ENCODE measurements at regions of chr1 and their contacts with region 1.

Region 1: DNA sequence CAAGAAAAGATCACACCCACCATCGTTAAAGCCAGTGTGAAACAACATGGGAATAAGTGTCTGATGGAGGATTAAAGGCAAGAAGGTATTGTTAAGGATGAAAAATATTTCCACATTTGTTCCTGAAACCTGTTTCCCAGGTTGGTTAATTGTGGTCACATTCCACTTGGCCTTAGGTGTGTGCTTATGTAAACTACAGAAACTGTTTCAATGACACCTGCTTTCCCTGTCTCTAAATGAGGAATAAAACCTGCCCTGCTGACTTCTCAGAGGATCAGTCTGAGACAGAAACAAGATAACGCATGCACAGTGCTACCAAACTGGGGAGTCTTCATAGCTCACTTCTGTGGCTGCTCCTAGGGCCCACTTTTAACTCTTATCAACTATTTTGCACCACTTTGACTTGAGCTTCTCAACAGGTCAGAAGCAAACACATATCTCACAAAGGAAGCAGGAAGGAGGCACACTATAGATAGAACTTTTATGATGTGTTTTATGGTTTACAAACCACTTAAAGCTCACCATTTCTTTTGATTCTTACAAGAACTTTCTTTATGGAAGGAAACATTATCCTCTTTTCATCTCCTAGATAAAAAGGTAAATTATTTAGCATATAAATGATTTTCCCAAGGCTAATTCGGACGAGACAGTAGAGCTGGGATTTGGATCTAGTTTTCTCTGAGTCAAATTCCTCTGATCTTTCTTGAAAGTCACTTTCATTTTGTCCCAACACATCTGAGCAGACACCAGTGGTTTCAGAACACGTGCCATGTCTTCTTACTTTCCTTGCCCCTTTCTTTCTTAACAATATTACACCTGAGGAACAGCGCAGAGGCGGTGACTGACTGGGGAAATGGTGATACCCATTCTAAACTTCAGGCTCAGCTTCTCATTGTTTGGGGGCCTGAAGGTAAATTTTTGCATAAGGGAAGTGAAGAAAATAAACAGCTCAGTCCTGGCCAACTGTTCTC is 33.4 kb downstream of the CYP2J2 start:
- DNase-seq: peak; percentile 24
- H3K4me3 Mint-ChIP-seq: peak overlapping the region; percentile 15
- H3K27ac Mint-ChIP-seq: peak overlapping the region; percentile 74
- H3K4me1 Mint-ChIP-seq: peaks cover 43% of the 10 kb centered on the region
- H3K27me3 Mint-ChIP-seq: no peaks in the 10 kb centered on the region
- CTCF ChIP-seq: no peak

Region 2: DNA sequence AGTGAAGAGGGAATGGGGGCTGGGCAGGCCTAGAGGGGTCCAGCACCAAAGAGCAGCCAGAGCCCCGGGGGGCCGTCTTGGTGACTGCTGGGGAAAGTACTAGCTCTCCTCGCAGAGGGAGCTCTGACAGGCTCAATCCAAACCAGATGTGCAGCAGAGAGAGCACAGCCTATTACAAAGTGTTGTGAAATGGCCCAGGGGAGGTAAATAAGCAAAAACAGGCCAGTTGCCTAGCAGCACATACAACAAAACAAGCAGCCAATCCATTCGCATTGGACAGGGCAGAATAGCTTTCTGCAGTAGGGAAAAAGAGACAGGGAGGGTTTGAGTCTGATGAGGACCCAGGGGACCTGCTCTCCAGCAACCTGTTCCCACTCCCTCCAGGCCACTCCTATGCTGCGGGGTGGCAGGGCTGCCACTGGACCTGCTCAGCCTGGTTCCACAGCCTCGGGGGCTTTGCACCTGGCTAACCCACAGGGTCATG is 835.9 kb before region 1 on chr1:
- CTCF ChIA-PET with region 1: no interaction called
- intact Hi-C with region 1: no loop called
- DNase-seq: peak; percentile 46
- H3K4me3 Mint-ChIP-seq: no peak overlapping the region
- H3K27ac Mint-ChIP-seq: no peak overlapping the region
- H3K4me1 Mint-ChIP-seq: peaks cover 27% of the 10 kb centered on the region
- H3K27me3 Mint-ChIP-seq: no peaks in the 10 kb centered on the region
- CTCF ChIP-seq: no peak

Region 3: DNA sequence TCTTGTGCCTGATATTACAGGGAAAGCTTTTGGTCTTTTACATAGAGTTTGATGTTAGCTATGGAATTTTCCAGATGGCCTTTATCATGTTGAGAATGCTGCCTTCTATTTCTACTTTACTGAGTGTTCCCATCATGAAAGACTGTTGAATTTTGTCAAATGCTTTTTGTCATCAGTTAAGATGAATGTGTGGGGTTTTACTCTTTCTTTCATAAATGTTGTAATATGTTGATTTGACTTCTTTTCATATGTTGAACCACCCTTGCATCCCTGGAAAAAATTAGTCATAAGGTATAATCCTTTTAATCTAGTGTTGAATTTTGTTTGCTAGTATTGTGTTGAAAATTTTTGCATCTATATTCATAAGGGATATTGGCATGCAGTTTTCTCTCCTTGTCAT is 94.5 kb before region 1 on chr1:
- CTCF ChIA-PET with region 1: no interaction called
- intact Hi-C with region 1: no loop called
- DNase-seq: no peak
- H3K4me3 Mint-ChIP-seq: no peak overlapping the region
- H3K27ac Mint-ChIP-seq: no peak overlapping the region
- H3K4me1 Mint-ChIP-seq: no peaks in the 10 kb centered on the region
- H3K27me3 Mint-ChIP-seq: no peaks in the 10 kb centered on the region
- CTCF ChIP-seq: no peak

Region 4: GRCh38 chr1:59871746-59872145 is 21.4 kb before region 1 on chr1:
- CTCF ChIA-PET with region 1: no interaction called
- intact Hi-C with region 1: no loop called
- DNase-seq: no peak
- H3K4me3 Mint-ChIP-seq: no peak overlapping the region
- H3K27ac Mint-ChIP-seq: no peak overlapping the region
- H3K4me1 Mint-ChIP-seq: no peaks in the 10 kb centered on the region
- H3K27me3 Mint-ChIP-seq: no peaks in the 10 kb centered on the region
- CTCF ChIP-seq: no peak

Region 5: DNA sequence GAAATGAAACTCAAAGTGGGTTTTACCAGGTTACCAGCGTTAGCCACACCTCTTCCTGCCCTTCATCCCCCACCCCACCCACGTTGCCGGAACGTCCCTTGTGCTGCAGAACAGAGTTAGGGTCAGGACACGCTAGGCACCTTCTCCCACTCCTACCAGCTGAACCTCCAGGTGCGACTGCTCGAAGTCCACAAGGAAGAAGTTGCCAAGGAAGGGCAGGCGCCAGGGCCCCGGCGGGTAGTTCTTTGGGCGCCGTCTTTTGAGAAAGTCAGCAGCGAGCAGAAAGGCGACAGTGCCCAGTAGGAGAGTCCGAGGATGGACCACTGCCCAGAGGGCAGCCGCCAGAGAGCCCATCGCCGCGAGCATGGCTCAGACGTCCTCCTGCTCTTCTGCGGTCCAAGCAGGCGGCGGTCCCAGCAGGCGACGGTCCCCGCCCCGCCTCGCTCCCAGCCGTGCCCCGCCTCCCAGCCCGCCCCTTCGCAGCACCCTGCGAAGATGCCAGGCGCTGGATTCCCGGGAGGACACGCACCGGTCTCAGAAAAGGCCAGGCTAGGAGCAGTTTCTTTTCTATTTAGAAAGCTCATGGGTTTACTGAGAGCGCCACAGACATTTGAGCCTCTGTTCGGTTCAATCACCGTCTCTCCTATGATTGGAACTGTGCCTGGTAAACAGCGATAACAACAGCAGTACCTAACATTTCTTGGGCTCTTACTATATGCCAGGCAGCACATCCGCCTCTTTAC is 33.4 kb after region 1 on chr1 and contains the start of gene CYP2J2:
- CTCF ChIA-PET with region 1: no interaction called
- intact Hi-C with region 1: loop called (anchors 5 kb)
- DNase-seq: peak; percentile 79
- H3K4me3 Mint-ChIP-seq: peak within 1 kb of the TSS; percentile 65
- H3K27ac Mint-ChIP-seq: peak within 1 kb of the TSS; percentile 1
- H3K4me1 Mint-ChIP-seq: peaks cover 11% of the 10 kb centered on the region
- H3K27me3 Mint-ChIP-seq: peaks cover 15% of the 10 kb centered on the region
- CTCF ChIP-seq: no peak
- total RNA-seq, gene CYP2J2: 15.2 and 17.0 TPM in 2 replicates